ENCODE measurements at regions of chr1 and their contacts with region 1.

Region 1: GRCh38 chr1:211258756-211259637 is at the start of gene RCOR3:
- DNase-seq: peak; percentile 96
- H3K4me3 Mint-ChIP-seq: peak within 1 kb of the TSS; percentile 88
- H3K27ac Mint-ChIP-seq: peak within 1 kb of the TSS; percentile 96
- H3K4me1 Mint-ChIP-seq: peaks cover 24% of the 10 kb centered on the region
- H3K27me3 Mint-ChIP-seq: no peaks in the 10 kb centered on the region
- CTCF ChIP-seq: peak; percentile 93
- total RNA-seq, gene RCOR3: 70.1 and 70.3 TPM in 2 replicates

Region 2: DNA sequence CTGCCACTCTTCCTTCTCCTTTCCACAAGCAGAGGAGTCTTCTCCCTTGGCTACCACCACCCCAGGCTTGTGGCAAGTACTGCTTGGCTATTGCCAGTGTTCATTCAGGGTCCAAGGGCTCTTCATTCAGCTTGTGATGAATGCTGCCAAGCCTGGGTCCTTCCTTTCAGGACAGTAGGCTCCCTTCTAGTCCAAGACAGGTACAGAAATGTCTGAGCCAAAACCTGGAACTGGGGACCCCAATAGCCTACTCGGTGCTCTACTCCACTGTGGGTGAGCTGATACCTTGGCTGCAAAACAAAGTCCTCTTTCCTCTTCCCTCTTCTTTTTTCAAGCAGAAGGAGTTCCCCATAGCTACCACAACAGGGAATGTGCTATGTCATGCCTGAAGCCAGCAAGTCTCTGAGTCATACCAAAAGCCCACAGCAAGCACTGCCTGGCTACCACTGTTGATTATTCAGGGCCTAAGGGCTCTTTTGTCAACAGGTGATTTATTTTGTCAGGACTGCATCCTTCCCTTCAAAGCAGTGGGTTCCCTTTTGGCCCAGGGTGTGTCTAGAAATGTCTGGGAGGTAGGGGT is 661.4 kb before region 1 on chr1:
- CTCF ChIA-PET with region 1: no interaction called
- POLR2A ChIA-PET with region 1: interaction called, 3 read pairs
- intact Hi-C with region 1: loop called (anchors 5 kb)
- DNase-seq: peak; percentile 94
- H3K4me3 Mint-ChIP-seq: no peak overlapping the region
- H3K27ac Mint-ChIP-seq: peak overlapping the region; percentile 98
- H3K4me1 Mint-ChIP-seq: peaks cover 19% of the 10 kb centered on the region
- H3K27me3 Mint-ChIP-seq: no peaks in the 10 kb centered on the region
- CTCF ChIP-seq: no peak

Region 3: DNA sequence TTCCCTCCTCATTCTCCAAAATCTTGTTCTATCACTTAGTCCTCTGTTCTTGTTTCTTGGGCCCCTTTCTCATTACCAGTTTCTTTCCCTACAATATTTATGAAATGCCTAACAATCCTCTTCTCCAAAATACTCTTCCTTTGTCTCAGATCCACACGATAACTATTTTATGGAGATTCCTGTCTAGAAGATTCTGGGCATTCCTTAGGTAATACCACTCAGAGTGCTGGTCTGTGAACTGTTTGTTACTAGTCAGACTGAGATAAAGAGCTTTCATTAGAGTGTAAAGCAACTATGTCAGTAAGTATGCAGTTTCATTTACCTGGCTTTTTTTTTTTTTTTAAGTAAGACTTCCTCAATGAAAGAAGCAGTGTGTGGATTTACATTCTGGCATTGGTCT is 17.9 kb before region 1 on chr1:
- CTCF ChIA-PET with region 1: interaction called, 9 read pairs
- POLR2A ChIA-PET with region 1: interaction called, 18 read pairs
- intact Hi-C with region 1: no loop called
- DNase-seq: no peak
- H3K4me3 Mint-ChIP-seq: no peak overlapping the region
- H3K27ac Mint-ChIP-seq: no peak overlapping the region
- H3K4me1 Mint-ChIP-seq: peaks cover 6% of the 10 kb centered on the region
- H3K27me3 Mint-ChIP-seq: no peaks in the 10 kb centered on the region
- CTCF ChIP-seq: no peak

Region 4: DNA sequence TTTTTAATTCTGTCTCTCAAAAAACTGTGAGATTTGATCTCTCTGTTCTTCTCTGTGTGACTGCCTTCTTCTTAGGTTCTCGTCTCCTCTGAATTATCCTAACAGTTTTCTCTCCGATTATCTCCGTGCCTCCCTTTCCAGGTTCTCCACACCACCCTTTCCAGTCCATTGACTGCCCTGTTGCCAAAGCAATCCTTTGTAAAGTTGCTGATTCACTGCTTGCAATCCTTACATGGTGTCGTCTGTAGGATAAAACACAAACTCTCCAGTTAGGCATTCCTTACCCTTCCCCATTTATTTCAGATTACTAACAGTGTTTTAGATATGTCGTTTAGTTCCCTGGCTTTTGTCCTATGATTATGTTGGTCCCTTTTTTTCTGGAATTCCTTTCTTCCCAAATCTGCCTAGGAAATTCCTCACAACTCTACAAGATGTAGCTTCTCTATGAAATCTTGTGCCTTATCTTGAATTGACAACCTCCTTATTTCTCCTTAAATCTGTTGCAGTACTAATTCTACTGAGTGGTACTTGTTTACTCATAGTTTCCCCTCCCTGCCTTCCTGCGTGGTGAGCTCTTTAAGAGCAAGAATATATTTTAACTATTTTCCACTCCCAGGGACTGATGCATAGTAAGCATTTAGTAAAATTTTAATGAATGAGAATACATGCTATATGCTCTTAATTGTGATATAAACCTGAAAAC is 22.5 kb after region 1 on chr1:
- CTCF ChIA-PET with region 1: interaction called, 5 read pairs
- POLR2A ChIA-PET with region 1: interaction called, 28 read pairs
- intact Hi-C with region 1: no loop called
- DNase-seq: no peak
- H3K4me3 Mint-ChIP-seq: no peak overlapping the region
- H3K27ac Mint-ChIP-seq: no peak overlapping the region
- H3K4me1 Mint-ChIP-seq: no peaks in the 10 kb centered on the region
- H3K27me3 Mint-ChIP-seq: no peaks in the 10 kb centered on the region
- CTCF ChIP-seq: no peak

Region 5: GRCh38 chr1:212162635-212163034 is 903.6 kb after region 1 on chr1:
- CTCF ChIA-PET with region 1: no interaction called
- POLR2A ChIA-PET with region 1: no interaction called
- intact Hi-C with region 1: no loop called
- DNase-seq: peak; percentile 88
- H3K4me3 Mint-ChIP-seq: no peak overlapping the region
- H3K27ac Mint-ChIP-seq: no peak overlapping the region
- H3K4me1 Mint-ChIP-seq: peaks cover 13% of the 10 kb centered on the region
- H3K27me3 Mint-ChIP-seq: no peaks in the 10 kb centered on the region
- CTCF ChIP-seq: no peak